H1 (cell line): ENCODE measurements at regions of chr2 and their contacts with region 1.

Region 1: GRCh38 chr2:215324811-215325210 is 13.0 kb downstream of the ATIC start:
- DNase-seq: no peak
- H3K4me3 ChIP-seq: no peak overlapping the region
- H3K27ac ChIP-seq: no peak overlapping the region
- H3K4me1 ChIP-seq: peaks cover 0 to 2% (median under 1%) of the 10 kb centered on the region in 4 experiments; a peak in 1 of 7 replicates
- H3K27me3 ChIP-seq: no peaks in the 10 kb centered on the region
- CTCF ChIP-seq: no peak
- EP300 ChIP-seq: no peak
- POLR2A ChIP-seq: no peak
- RAD21 ChIP-seq: no peak

Region 2: DNA sequence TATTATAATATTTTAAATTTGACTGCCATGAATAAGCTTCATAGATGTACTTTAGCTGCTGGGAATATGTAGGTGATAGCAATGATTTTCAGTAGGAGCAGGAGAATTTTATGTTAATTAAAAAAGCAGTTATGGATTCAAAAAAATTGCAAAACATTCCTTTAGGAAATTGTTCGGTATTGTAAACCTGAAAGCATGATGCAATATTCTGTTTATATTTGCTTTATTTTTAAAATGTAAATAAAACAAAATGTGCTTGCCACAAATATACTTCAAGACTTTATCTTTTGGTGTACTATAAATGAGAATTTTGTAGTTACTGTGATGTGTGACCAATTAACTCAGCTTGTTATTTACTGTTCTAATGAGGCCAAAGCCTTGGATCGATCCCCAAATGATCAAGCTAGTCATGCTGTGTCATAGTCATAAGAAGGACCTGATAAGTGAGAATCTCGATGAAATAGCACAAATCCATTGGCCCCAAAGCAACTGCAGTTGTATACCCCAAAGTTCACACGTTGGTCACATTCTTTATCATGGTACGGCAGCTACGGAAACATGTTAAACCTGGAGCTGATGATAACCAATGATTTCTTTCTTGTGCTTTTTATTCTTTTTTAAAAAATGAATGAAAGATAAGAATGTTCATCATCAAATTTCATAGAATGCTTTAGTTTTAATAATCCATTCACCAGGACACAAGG is 36.5 kb before region 1 on chr2:
- CTCF ChIA-PET with region 1: no interaction called
- POLR2A ChIA-PET with region 1: no interaction called
- DNase-seq: no peak
- H3K4me3 ChIP-seq: no peak overlapping the region
- H3K27ac ChIP-seq: no peak overlapping the region
- H3K4me1 ChIP-seq: no peaks in the 10 kb centered on the region
- H3K27me3 ChIP-seq: no peaks in the 10 kb centered on the region
- CTCF ChIP-seq: no peak
- EP300 ChIP-seq: no peak
- POLR2A ChIP-seq: no peak
- RAD21 ChIP-seq: no peak

Region 3: DNA sequence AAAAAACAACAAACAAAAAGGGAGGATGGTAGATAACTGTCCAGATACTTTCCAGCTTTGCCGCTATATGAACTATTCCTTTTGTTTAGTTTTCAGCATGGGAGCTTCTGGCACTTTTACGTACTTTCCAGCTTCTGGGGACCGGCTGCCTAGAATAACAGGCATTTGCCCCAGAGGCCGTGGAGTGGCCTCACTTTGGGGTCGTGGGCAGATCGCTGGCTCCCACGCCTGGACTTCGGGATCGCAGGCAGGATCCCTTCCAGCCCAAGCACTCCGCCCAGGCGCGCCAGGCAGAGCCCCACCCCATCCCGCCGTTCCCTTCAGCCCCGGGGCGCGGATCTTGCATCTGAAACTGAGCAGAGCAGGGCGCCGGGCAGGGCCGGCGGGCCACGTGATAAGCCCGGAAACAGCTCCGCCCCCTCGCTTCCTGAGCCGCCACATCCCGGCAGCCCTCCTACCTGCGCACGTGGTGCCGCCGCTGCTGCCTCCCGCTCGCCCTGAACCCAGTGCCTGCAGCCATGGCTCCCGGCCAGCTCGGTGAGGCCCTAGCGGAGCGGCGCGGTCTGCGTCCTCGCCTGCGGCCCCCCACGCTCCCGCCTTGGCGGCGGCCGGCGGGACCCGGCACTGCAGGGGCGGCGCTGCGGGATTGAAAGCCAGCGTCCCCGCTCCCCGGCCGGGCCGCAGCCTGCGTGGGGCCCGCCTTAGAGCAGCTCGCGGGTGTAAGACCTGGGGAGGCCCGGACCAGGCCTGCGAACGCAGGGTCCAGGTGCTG is 13.0 kb before region 1 on chr2 and contains the start of gene ATIC:
- CTCF ChIA-PET with region 1: interaction called, 3 read pairs
- POLR2A ChIA-PET with region 1: interaction called, 16 read pairs
- DNase-seq: peak; percentile 84 to 91
- H3K4me3 ChIP-seq: peak within 1 kb of the TSS; percentile 51 to 84 (median 61)
- H3K27ac ChIP-seq: peak within 1 kb of the TSS; percentile 73
- H3K4me1 ChIP-seq: peaks cover 0 to 12% (median 2%) of the 10 kb centered on the region in 4 experiments; a peak in 5 of 7 replicates
- H3K27me3 ChIP-seq: no peaks in the 10 kb centered on the region
- CTCF ChIP-seq: 0 out of 4 replicates have a peak, but pooled peaks of 1 of the 3 experiments have one; percentile 1
- EP300 ChIP-seq: no peak
- POLR2A ChIP-seq: peak; percentile 64 to 94
- RAD21 ChIP-seq: no peak; a peak in 1 of 4 replicates
- total RNA-seq, gene ATIC: 318 and 319 TPM in 2 replicates